ENCODE measurements at regions of chr12 and their contacts with region 1.

Region 1: DNA sequence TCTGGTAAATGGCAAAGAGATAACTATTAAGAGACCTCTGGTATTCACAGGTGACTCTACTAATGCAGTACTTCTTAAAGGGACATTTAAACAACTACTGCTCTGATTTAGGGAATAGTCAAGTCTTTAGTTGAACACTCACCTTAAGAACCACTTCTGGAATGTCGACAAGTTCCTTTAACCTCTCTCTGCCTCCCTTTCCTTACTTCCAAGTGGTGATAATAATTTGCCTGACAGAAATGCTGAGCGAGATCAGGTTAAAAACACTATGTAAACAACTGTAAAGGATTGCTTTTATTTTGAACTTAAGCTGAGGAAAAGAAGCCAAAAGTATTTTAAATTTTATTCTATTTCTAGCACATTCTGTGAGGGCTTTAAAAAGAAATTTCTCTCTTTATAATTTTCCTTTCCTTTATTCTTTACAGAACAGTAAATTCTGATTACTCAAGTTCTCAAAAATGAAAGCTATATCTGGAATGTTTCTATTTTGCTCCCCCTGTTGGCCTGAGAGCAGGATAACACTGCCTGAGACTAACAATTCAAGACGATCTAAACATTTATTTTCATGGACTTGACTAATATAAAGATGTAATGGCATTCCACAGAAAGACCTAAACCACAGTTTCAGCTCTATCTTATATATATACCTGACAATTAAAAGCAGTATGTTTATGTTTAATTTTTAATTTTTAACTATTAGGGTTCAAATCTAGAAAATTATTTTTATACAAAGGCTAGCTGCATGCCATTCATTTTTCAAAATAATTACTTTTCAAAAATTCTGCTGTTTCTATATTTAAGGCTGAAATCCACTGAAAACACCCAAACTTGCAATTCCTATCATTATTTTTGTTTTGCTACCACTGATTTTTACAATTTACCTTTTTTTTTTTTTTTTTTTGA is 29.2 kb downstream of the ZCCHC8 start:
- DNase-seq: peak in 1 of 4 donors; percentile 13
- ATAC-seq: peak; percentile 85
- H3K4me3 ChIP-seq: no peak overlapping the region
- H3K27ac ChIP-seq: peak overlapping the region; percentile 23 to 69 (median 37)
- H3K4me1 ChIP-seq: peaks cover 8% of the 10 kb centered on the region
- H3K27me3 ChIP-seq: no peaks in the 10 kb centered on the region
- CTCF ChIP-seq: peak; percentile 35 to 91 (median 87)
- POLR2A ChIP-seq: no peak

Region 2: GRCh38 chr12:122306407-122306806 is 165.2 kb before region 1 on chr12:
- intact Hi-C with region 1: no loop called
- DNase-seq: no peak
- ATAC-seq: no peak
- H3K4me3 ChIP-seq: no peak overlapping the region
- H3K27ac ChIP-seq: no peak overlapping the region
- H3K4me1 ChIP-seq: no peaks in the 10 kb centered on the region
- H3K27me3 ChIP-seq: no peaks in the 10 kb centered on the region
- CTCF ChIP-seq: no peak
- POLR2A ChIP-seq: no peak

Region 3: DNA sequence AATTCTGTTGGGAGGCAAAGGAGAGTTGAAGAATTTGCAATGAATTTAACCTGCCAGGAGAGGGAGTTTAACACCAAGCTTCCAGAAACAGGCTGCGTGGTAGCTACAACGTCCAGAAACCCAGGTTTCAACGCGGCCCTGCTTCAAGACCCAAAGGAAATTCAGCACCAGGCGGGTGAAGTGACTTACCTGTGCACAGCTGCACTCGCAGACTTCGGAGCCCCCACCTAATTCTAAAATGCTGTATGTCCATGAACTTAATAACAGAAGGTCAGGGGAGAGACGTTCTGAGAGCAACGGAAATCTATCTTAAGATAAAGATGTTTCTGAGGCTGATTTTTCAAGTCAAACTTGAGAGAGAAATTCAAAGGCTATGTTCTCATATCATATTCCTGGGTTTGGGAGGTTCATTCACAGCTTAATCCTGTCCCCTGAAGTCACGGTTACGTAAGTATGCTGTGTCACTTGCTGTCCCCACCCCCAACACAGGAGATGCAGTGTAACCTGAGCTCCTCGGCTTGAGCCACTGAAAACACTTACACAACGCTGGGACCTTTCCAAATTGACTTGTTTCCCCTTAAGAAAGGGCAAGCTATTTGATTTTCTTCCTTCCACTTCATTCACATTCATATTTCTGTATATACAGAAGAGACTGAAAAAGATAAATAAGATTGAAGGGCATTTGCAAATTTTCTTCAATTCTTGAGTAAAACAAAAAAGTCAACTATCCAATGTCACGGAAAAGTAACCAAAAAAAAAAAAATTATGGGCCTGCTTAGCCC is 71.8 kb before region 1 on chr12:
- intact Hi-C with region 1: loop called (anchors 10 kb)
- DNase-seq: peak; percentile 84 to 95 (median 92)
- ATAC-seq: peak; percentile 94
- H3K4me3 ChIP-seq: no peak overlapping the region
- H3K27ac ChIP-seq: peak overlapping the region; percentile 86 to 97 (median 94)
- H3K4me1 ChIP-seq: peaks cover 26% of the 10 kb centered on the region
- H3K27me3 ChIP-seq: no peaks in the 10 kb centered on the region
- CTCF ChIP-seq: peak; percentile 45 to 88 (median 79)
- POLR2A ChIP-seq: no peak

Measured in body of pancreas (tissue), 4 donors.